ENCODE measurements at regions of chr4 and their contacts with region 1.

Region 1: GRCh38 chr4:7075962-7076695 is 8.3 kb upstream of the GRPEL1 start:
- DNase-seq: no peak
- ATAC-seq: peak in 1 of 4 donors; percentile 28
- H3K4me3 ChIP-seq: no peak overlapping the region
- H3K27ac ChIP-seq: no peak overlapping the region
- H3K4me1 ChIP-seq: no peaks in the 10 kb centered on the region
- H3K27me3 ChIP-seq: no peaks in the 10 kb centered on the region
- CTCF ChIP-seq: no peak

Region 2: DNA sequence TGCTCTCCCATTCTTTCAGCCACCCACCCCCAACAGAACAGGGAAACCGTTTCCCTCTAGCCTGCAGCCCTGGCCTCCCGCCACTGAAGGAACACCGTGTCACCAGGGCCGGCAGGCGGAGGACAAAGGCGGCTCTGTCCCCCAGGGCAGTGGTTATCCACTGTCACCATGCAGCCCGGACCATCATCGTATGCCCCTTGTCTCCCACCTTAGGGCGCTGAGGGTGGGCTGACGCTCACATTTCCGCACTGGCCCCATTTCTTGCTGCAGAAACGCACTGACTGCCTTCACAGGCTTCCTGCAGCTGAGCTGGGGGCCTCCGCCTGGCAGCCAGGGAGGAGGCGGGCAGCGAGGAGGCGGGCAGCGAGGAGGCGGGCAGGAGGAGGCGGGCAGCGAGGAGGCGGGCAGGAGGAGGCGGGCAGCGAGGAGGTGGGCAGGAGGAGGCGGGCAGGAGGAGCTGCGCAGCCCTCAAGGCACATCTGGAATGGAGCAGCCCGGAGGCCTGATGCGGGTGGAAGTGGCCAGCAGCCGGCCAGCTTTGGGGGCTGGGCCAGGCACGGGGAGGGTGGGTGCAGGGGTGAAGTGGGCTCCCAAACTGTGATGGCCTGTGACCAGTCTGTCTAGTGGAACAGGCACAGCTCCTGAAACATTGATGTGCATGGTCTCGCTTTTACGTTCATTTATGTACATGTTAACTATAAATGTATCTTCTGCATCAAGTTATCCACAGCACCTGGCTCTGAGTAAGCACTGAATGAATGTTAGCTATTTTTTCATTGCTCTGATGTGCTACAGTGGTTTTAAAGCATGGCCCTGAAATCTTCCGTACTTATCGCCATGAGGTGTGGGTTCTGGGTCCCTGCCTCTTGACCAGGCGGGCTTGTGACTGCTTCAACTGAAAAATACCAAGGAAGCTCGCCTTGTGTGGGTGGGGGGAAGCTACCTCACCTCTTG is 314.2 kb before region 1 on chr4:
- intact Hi-C with region 1: no loop called
- DNase-seq: peak in 1 of 6 donors; percentile 52
- ATAC-seq: peak; percentile 40 to 82 (median 56)
- H3K4me3 ChIP-seq: no peak overlapping the region
- H3K27ac ChIP-seq: no peak overlapping the region
- H3K4me1 ChIP-seq: no peaks in the 10 kb centered on the region
- H3K27me3 ChIP-seq: no peaks in the 10 kb centered on the region
- CTCF ChIP-seq: no peak

Region 3: DNA sequence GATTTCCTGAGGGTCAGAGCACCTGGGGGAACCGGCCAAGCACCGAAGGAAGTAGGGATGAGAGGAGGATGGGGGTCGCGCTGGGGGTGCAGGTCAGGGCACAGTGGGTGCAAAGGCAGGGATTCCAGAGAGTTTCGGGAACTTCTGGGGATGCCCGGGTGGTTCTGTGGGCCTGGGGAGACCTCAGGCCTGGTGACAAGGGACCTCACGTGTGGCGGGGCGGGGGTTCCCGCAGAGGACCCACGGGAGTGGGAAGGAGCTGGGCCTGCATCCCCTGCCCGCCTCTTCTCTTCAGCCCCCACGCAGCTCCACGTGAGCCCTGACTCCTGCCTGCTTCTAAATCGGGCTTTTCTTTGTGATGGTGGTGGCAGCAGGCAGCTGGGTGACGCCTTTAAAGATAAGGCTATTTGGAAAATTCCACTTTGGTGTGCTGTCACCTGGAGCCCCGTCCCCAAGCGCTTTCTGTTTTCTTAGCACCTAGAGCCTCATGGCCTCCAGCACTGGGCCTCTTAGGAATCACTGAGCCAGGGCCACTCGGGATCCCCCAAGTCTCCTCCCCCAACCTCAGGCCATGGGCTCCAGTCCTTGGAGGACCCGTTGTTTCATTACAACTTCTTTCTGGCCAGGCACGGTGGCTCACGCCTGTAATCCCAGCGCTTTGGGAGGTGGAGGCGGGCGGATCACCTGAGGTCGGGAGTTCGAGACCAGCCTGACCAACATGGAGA is 173.6 kb before region 1 on chr4:
- intact Hi-C with region 1: loop called in 2 of 3 experiments (anchors 5 to 10 kb)
- DNase-seq: no peak
- ATAC-seq: no peak
- H3K4me3 ChIP-seq: no peak overlapping the region
- H3K27ac ChIP-seq: no peak overlapping the region
- H3K4me1 ChIP-seq: peaks cover 0 to under 1% (median 0%) of the 10 kb centered on the region in 3 donors
- H3K27me3 ChIP-seq: no peaks in the 10 kb centered on the region
- CTCF ChIP-seq: no peak

Region 4: GRCh38 chr4:6916069-6916586 is 160.0 kb before region 1 on chr4:
- intact Hi-C with region 1: no loop called
- DNase-seq: peak in 1 of 6 donors; percentile 28
- ATAC-seq: no peak
- H3K4me3 ChIP-seq: no peak overlapping the region
- H3K27ac ChIP-seq: no peak overlapping the region
- H3K4me1 ChIP-seq: peaks cover 0 to 21% (median 16%) of the 10 kb centered on the region in 3 donors
- H3K27me3 ChIP-seq: no peaks in the 10 kb centered on the region
- CTCF ChIP-seq: no peak

Region 5: GRCh38 chr4:7041801-7042696 is 34.1 kb before region 1 on chr4:
- intact Hi-C with region 1: no loop called
- DNase-seq: peak in 4 of 6 donors; percentile 50 to 76 (median 62)
- ATAC-seq: peak; percentile 28 to 58 (median 44)
- H3K4me3 ChIP-seq: peak overlapping the region; percentile 61 to 95 (median 84)
- H3K27ac ChIP-seq: peak overlapping the region; percentile 69 to 73 (median 72)
- H3K4me1 ChIP-seq: peaks cover 15 to 30% (median 25%) of the 10 kb centered on the region in 3 donors
- H3K27me3 ChIP-seq: no peaks in the 10 kb centered on the region
- CTCF ChIP-seq: no peak